OCI-LY7 (cell line): ENCODE measurements at regions of chr4 and their contacts with region 1.

Region 1: DNA sequence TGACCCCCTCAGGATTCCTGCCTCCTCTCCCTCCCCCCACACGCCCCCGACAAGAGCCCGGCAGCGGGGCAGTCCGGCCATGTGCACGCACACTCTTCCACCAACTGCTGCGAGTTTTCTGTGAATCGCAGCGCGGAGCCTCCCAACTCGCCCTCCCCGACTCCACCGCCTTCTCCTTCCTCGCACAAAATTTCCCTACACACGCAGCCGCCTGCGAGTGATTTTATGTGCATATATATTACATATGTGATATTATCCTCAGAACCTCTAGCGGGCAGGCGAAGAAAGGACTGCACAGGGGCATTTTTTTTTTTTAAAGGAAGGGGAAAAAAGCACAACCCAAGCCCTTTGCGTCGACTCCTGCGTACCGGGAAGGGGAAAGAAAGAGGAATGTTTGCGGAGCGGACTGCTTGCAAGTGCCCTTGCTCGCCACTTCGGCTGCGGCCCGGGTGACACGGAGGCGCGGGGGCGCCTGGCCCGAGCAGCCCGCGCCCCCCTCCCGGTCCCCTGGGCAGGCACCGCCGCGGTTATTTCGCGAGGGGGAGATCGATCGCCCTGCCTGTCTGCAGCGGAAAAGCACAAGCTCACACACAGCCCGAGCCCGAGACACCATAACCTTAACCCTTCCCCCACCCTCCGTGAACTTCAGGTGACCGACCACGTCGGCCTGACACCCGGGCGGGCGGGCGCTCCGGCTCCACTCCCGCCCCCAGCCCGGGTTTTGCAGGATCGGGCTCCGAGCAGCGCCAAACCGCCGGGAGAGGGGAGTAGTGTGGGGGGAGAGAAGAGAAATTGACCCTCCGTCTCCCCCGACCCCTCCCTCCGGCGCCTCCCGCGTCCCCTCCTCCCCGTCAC is 2.3 kb downstream of the ZNF827 start:
- DNase-seq: peak; percentile 89
- H3K4me3 ChIP-seq: peak overlapping the region; percentile 87
- H3K27ac ChIP-seq: peak overlapping the region; percentile 92
- H3K4me1 ChIP-seq: peaks cover 58% of the 10 kb centered on the region
- CTCF ChIP-seq: peak; percentile 67

Region 2: GRCh38 chr4:145501051-145501660 is 435.2 kb before region 1 on chr4:
- CTCF ChIA-PET with region 1: no interaction called
- POLR2A ChIA-PET with region 1: no interaction called
- intact Hi-C with region 1: loop called (anchors 5 kb)
- DNase-seq: peak; percentile 96
- H3K4me3 ChIP-seq: peak overlapping the region; percentile 51
- H3K27ac ChIP-seq: peak overlapping the region; percentile 99
- H3K4me1 ChIP-seq: peaks cover 100% of the 10 kb centered on the region
- CTCF ChIP-seq: 0 out of 2 replicates have a peak, but pooled peaks have one; percentile 3

Region 3: DNA sequence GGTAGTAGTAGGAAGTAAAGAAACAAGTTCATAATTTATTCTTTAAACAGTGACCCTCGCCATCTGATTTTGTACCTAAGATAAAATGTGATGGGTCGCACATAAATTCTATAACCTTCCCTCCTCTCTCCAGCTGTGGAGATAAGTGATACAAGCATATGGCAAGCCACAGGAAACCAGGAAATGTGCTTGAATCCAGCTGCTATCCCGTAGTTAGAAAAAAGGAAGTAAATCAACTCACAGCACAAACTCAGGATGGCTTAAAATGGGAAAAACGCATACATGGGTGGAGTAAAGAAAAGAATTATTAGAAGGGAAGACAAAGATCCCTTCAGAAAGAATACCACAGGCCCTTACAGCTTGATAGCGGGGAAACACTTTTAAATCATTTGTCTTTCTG is 75.9 kb before region 1 on chr4:
- CTCF ChIA-PET with region 1: no interaction called
- POLR2A ChIA-PET with region 1: no interaction called
- intact Hi-C with region 1: no loop called
- DNase-seq: no peak
- H3K4me3 ChIP-seq: no peak overlapping the region
- H3K27ac ChIP-seq: no peak overlapping the region
- H3K4me1 ChIP-seq: no peaks in the 10 kb centered on the region
- CTCF ChIP-seq: no peak

Region 4: GRCh38 chr4:145960012-145960411 is 23.6 kb after region 1 on chr4:
- CTCF ChIA-PET with region 1: no interaction called
- POLR2A ChIA-PET with region 1: no interaction called
- intact Hi-C with region 1: no loop called
- DNase-seq: no peak
- H3K4me3 ChIP-seq: no peak overlapping the region
- H3K27ac ChIP-seq: no peak overlapping the region
- H3K4me1 ChIP-seq: peaks cover 3% of the 10 kb centered on the region
- CTCF ChIP-seq: no peak

Region 5: DNA sequence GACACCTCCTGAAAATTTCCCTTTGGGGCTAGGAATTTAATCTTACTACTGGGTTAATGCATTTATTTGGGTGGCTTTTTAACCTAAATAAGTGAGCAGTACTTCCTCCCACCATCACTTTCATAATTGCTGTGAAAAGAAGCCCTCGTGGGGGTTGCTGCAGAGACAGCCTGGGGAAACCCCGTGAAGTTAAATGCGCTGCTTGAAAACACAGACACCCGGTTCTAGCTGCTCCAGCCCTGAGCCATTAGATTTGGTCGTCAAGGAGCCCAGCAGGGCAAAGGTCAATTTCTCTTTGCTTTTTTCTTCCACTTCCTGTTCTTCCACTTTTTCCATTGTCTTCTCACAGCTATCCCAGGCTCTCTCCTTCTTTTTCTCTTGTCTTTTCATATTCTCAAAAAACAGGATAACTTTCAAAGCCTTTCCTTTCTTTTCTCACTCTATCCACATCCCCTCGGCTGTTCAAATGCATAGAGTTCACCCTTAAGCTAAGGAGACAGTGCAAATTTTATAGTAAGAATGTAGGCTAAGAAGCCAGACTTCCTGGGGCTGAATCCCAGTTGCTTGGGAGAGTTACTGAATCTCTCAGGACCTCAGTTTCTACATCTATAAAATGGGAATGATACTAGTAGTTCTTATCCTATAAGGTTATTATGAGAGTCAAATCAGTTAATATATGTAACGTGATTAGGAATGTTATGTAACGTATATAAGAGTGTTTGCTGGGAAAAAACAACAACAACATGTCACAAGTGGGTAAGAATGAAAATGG is 93.8 kb after region 1 on chr4:
- CTCF ChIA-PET with region 1: no interaction called
- POLR2A ChIA-PET with region 1: interaction called, 5 read pairs
- intact Hi-C with region 1: loop called (anchors 5 kb)
- DNase-seq: peak; percentile 75
- H3K4me3 ChIP-seq: peak overlapping the region; percentile 41
- H3K27ac ChIP-seq: peak overlapping the region; percentile 48
- H3K4me1 ChIP-seq: peaks cover 53% of the 10 kb centered on the region
- CTCF ChIP-seq: no peak

Region 6: DNA sequence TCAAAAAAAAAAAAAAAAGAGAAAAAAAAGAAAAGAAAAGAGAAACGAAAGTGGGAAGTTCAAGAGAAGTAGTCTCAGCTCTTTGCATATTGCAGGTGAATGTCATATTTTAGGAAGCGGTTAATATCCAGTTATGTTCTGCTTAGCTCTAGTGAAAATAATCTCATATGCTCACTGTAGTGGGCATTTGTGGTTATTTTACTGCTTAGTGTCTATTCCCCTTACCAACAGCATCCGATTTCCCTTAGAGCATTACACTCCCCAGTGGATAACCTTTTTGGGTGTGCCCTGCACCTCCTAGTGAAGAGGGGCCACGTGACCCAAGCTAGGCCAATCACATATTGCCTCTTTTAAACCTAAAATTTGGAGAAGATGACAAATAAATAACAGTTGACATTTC is 113.4 kb after region 1 on chr4:
- CTCF ChIA-PET with region 1: no interaction called
- POLR2A ChIA-PET with region 1: interaction called, 3 read pairs
- intact Hi-C with region 1: loop called (anchors 2 kb)
- DNase-seq: peak; percentile 95
- H3K4me3 ChIP-seq: peak overlapping the region; percentile 43
- H3K27ac ChIP-seq: peak overlapping the region; percentile 98
- H3K4me1 ChIP-seq: peaks cover 66% of the 10 kb centered on the region
- CTCF ChIP-seq: 0 out of 2 replicates have a peak, but pooled peaks have one; percentile 28

Region 7: DNA sequence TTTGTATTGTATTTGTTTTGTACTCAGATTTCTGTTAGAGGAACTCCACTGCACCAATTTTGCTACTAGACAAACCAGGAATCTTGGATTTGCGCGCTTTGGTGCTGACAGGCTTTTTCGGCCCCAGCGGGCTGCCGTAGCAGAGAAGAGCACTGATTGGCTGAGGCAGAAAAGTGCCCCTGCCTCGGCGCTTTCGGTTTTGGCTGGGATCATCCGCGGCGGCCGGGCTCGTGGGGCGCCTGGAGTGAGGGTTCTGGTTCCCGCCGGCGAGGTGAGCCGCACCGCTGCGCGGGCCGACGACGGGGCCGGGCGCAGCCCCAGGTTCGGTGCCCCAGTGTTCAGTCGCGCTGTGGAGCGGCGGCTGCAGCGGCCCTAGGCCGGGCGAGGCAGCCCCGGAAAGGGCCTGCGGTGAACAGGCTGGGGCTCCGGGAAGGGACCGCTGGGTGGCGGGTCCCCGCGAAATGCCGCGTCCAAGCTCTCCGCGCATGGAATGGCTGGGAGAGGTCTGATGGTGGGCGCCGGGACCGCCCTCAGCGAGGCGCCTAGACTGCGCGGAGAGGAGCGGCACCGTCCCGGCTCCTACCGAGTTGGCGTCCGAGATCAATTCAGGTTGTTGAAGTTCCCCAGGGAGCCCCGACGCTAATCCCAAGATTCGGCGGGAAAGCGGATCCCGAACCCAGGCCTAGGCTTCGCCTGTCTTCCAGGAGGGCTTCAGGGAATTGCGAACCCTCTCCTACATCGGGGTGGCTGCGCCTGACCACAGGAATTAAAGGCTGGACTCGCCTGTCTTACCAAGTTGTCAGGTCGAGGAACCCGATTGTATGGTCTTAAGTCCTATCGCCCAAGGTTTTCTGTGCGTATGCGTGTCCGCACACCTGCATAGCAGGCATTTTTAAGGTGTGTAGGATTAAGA is 239.4 kb after region 1 on chr4 and contains the start of gene LSM6:
- CTCF ChIA-PET with region 1: no interaction called
- POLR2A ChIA-PET with region 1: interaction called, 4 read pairs
- intact Hi-C with region 1: loop called (anchors 5 kb)
- DNase-seq: peak; percentile 86
- H3K4me3 ChIP-seq: peak within 1 kb of the TSS; percentile 92
- H3K27ac ChIP-seq: peak within 1 kb of the TSS; percentile 56
- H3K4me1 ChIP-seq: peaks cover 46% of the 10 kb centered on the region
- CTCF ChIP-seq: 0 out of 2 replicates have a peak, but pooled peaks have one; percentile 28
- total RNA-seq, gene LSM6: 123 and 132 TPM in 2 replicates